Activated CD8-positive, alpha-beta T cell treated with anti-CD3 and anti-CD28 coated beads, Interleukin-2, amount 10 ng/mL, durations not matched to agents 7 days and 5 days (primary cell): ENCODE measurements at regions of chr1 and their contacts with region 1.

Region 1: GRCh38 chr1:153842006-153842471 is 66.8 kb downstream of the SLC27A3 start:
- DNase-seq: no peak
- ATAC-seq: no peak
- H3K4me3 Mint-ChIP-seq: no peak overlapping the region
- H3K27ac Mint-ChIP-seq: no peak overlapping the region
- H3K4me1 Mint-ChIP-seq: peaks cover 9% of the 10 kb centered on the region
- H3K27me3 Mint-ChIP-seq: no peaks in the 10 kb centered on the region

Region 2: DNA sequence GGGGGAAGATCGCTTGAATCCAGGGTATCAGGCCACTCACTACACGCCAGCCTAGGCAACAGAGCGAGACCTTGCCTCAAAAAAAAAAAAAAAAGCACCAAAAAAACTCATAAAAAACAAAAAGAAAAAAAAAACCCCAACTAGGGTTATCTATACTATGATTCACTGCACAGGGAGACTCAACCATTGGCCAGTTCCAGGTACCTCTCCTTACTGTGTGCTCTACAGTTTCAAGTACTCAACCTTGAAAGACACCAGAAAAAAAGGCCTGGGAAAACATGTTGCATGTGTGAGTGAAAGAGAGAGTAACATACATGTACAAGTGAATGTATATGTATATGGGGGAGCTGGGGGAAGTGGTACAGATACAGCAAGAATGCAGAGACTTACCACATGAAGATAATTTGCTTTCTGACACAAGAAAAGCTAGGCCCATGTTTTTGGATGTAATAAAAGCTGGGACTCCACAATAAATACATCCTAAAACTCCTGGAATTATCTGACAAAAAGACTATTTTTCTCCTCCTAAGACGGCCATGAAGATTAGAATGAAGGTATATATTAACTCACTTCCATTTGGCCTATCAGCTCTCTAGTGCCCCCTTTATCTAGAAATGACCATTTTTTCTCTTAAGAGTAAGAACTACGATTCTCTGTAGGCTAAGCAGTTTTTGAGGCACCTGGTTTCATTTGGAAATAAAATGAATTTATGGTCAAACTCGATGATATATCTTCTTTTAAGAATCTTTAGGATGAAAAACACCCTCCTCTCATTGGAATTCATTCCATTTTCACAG is 14.7 kb before region 1 on chr1:
- CTCF ChIA-PET with region 1: interaction called, 11 read pairs
- POLR2A ChIA-PET with region 1: no interaction called
- DNase-seq: no peak
- ATAC-seq: no peak
- H3K4me3 Mint-ChIP-seq: no peak overlapping the region
- H3K27ac Mint-ChIP-seq: no peak overlapping the region
- H3K4me1 Mint-ChIP-seq: no peaks in the 10 kb centered on the region
- H3K27me3 Mint-ChIP-seq: no peaks in the 10 kb centered on the region

Region 3: GRCh38 chr1:153860285-153860684 is 18.2 kb after region 1 on chr1:
- CTCF ChIA-PET with region 1: no interaction called
- POLR2A ChIA-PET with region 1: no interaction called
- DNase-seq: no peak
- ATAC-seq: no peak
- H3K4me3 Mint-ChIP-seq: no peak overlapping the region
- H3K27ac Mint-ChIP-seq: no peak overlapping the region
- H3K4me1 Mint-ChIP-seq: peaks cover 12% of the 10 kb centered on the region
- H3K27me3 Mint-ChIP-seq: no peaks in the 10 kb centered on the region

Region 4: GRCh38 chr1:153977250-153978240 is 135.5 kb after region 1 on chr1 and contains the start of gene JTB:
- CTCF ChIA-PET with region 1: no interaction called
- POLR2A ChIA-PET with region 1: no interaction called
- DNase-seq: peak; percentile 91
- ATAC-seq: peak; percentile 96
- H3K4me3 Mint-ChIP-seq: peak within 1 kb of the TSS; percentile 97
- H3K27ac Mint-ChIP-seq: peak within 1 kb of the TSS; percentile 93
- H3K4me1 Mint-ChIP-seq: peaks cover 48% of the 10 kb centered on the region
- H3K27me3 Mint-ChIP-seq: no peaks in the 10 kb centered on the region
- total RNA-seq, gene JTB: 133 to 140 TPM

Region 5: DNA sequence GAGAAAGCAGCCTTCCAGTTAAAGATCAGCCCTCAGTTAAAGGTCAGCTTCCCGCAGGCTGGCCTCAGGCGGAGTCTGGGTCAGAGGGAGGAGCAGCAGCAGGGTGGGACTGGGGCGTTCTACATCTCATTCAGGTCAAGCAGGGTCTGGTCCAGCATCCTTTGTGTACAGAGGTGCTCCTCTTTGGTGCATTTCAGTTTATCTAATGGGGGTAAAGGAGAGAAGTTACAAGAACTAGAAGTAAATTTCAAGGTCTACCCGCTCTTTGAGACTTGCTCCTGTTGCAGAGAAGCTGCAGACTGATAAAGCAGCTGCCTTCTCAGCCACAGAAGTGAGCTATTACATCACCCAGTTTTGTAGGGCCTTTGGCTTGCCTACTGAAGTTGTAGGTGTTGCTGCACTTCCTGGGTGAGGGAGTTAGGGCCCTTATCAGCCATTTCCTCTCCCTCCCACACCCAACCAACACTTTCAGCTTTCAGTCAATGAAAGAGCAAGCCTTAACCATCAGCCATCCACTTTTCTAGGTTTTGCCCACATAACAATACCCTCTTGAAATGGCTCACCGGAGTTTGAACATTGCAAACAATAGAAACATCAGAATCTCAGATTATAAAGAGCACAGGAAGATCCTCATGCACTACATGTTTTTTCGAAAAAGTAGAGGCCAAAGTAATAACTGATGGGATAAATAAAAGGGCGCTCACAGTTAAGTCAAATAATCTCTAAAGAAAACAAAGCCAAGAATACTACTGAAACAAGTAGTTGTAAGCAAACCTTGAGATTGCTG is 315.7 kb after region 1 on chr1:
- CTCF ChIA-PET with region 1: no interaction called
- POLR2A ChIA-PET with region 1: no interaction called
- DNase-seq: peak; percentile 89
- ATAC-seq: peak; percentile 98
- H3K4me3 Mint-ChIP-seq: peak overlapping the region; percentile 66
- H3K27ac Mint-ChIP-seq: peak overlapping the region; percentile 94
- H3K4me1 Mint-ChIP-seq: peaks cover 73% of the 10 kb centered on the region
- H3K27me3 Mint-ChIP-seq: no peaks in the 10 kb centered on the region